ENCODE measurements at regions of chr14 and their contacts with region 1.

Region 1: GRCh38 chr14:105351920-105352851 is 37.6 kb downstream of the PACS2 start:
- DNase-seq: peak; percentile 79 to 93
- ATAC-seq: peak; percentile 89 to 99 (median 97)
- H3K4me3 ChIP-seq: no peak overlapping the region
- H3K4me3 Mint-ChIP-seq: no peak overlapping the region
- H3K27ac ChIP-seq: no peak overlapping the region
- H3K27ac Mint-ChIP-seq: no peak overlapping the region
- H3K4me1 ChIP-seq: peaks cover 4% of the 10 kb centered on the region
- H3K4me1 Mint-ChIP-seq: peaks cover 0 to 4% of the 10 kb centered on the region in 2 donors
- H3K27me3 ChIP-seq: no peaks in the 10 kb centered on the region
- H3K27me3 Mint-ChIP-seq: no peaks in the 10 kb centered on the region
- CTCF ChIP-seq: peak; percentile 80

Region 2: GRCh38 chr14:104976198-104977007 is 375.8 kb before region 1 on chr14:
- intact Hi-C with region 1: loop called (anchors 10 kb)
- DNase-seq: peak; percentile 88 to 92
- ATAC-seq: peak; percentile 84 to 91 (median 84)
- H3K4me3 ChIP-seq: no peak overlapping the region
- H3K4me3 Mint-ChIP-seq: peak overlapping the region; percentile 85
- H3K27ac ChIP-seq: no peak overlapping the region
- H3K27ac Mint-ChIP-seq: peak overlapping the region in 1 of 2 donors; percentile 35
- H3K4me1 ChIP-seq: peaks cover 15% of the 10 kb centered on the region
- H3K4me1 Mint-ChIP-seq: peaks cover 11 to 24% of the 10 kb centered on the region in 2 donors
- H3K27me3 ChIP-seq: peaks cover 15% of the 10 kb centered on the region
- H3K27me3 Mint-ChIP-seq: peaks cover 8 to 22% of the 10 kb centered on the region in 2 donors
- CTCF ChIP-seq: peak; percentile 95

Region 3: DNA sequence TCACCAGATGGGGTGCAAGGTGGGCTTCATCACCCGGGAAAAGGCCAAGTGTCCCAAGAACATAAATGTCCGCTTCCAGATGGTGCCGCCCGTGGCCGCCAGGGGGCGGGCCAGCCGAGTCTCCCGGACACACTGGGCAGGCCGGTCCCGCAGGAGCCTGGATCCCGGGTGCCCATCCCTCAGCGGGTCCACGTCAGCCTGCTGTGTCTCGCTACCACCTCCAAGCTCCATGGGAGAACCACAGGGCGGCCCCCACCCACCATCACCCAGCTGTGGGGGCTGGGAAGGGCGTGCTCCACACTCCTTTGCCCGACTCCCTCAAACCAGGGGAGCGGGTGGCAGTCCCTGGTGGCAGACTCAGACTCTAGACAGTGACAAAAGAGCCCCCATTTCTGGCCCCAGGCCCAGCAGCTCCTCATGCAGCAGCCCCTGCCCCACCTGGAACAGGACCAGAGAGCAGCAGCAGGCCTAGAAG is 149.1 kb before region 1 on chr14:
- intact Hi-C with region 1: loop called (anchors 1 kb)
- DNase-seq: peak; percentile 70 to 72
- ATAC-seq: peak; percentile 54 to 69 (median 62)
- H3K4me3 ChIP-seq: no peak overlapping the region
- H3K4me3 Mint-ChIP-seq: no peak overlapping the region
- H3K27ac ChIP-seq: no peak overlapping the region
- H3K27ac Mint-ChIP-seq: no peak overlapping the region
- H3K4me1 ChIP-seq: peaks cover 37% of the 10 kb centered on the region
- H3K4me1 Mint-ChIP-seq: peaks cover 0 to 27% of the 10 kb centered on the region in 2 donors
- H3K27me3 ChIP-seq: peaks cover 9% of the 10 kb centered on the region
- H3K27me3 Mint-ChIP-seq: peaks cover 0 to 30% of the 10 kb centered on the region in 2 donors
- CTCF ChIP-seq: peak; percentile 96

Measured in natural killer cell (primary cell).